GM23248 (cell line): ENCODE measurements at regions of chr6 and their contacts with region 1.

Region 1: GRCh38 chr6:119110601-119111548 is 32.4 kb upstream of the FAM184A start:
- DNase-seq: peak; percentile 77
- H3K4me3 ChIP-seq: no peak overlapping the region
- H3K27ac ChIP-seq: peak overlapping the region; percentile 43; the same call in 1 of the 2 replicates
- H3K4me1 ChIP-seq: peaks cover 15% of the 10 kb centered on the region
- H3K27me3 ChIP-seq: no peaks in the 10 kb centered on the region

Region 2: GRCh38 chr6:118968416-118968815 is 142.5 kb before region 1 on chr6:
- in situ Hi-C with region 1: loop called (anchors 10 kb)
- DNase-seq: peak; percentile 38
- H3K4me3 ChIP-seq: no peak overlapping the region
- H3K27ac ChIP-seq: no peak overlapping the region
- H3K4me1 ChIP-seq: no peaks in the 10 kb centered on the region
- H3K27me3 ChIP-seq: no peaks in the 10 kb centered on the region